ENCODE measurements at regions of chr6 and their contacts with region 1.

Region 1: DNA sequence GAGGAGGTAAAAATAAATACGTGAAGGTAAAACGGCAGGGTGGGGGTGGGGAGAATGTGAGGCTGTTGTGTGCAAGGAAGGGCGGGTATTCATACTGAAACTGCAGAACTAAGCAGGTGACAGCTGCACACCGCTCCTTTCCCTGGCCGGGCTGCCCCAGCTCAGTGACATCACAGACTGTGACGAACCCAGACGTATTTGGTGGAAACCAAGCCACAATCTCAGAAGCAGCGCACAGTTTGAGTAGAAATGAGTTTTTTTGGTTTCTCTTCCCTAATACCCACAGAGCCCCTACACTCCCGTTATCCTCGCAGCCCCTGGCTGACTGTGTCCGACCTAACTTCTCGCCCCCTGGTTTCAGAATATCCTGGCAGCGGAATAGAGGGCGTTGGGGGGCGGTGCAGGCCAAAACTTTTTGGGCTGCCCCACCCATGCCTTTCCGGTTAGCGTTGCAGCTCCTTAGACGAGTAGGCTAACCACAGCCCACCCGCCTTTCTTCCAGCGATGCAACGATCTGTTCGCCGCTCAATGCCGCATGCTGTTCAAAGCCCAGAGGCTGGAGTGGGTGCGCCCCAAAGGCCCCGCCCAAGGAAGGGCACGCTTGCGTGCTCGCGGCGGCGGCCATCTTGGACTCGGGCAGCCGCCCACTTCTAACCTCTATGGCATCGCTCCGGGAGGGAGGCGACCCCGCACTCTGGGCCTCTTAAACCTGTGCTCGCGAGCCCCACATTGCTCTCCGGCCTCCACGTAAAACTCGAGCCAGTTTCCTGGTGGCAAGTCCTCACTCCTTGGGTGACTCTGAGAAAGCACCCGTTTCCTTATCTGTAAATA is 9.1 kb downstream of the BAK1 start:
- DNase-seq: peak; percentile 83 to 97 (median 88)
- ATAC-seq: peak; percentile 84
- H3K4me3 ChIP-seq: peak overlapping the region; percentile 64
- H3K4me3 Mint-ChIP-seq: peak overlapping the region; percentile 88
- H3K27ac ChIP-seq: peak overlapping the region; percentile 93 to 97
- H3K27ac Mint-ChIP-seq: peak overlapping the region; percentile 99
- H3K4me1 ChIP-seq: peaks cover 42% of the 10 kb centered on the region
- H3K4me1 Mint-ChIP-seq: peaks cover 35% of the 10 kb centered on the region
- H3K27me3 ChIP-seq: no peaks in the 10 kb centered on the region
- H3K27me3 Mint-ChIP-seq: no peaks in the 10 kb centered on the region
- CTCF ChIP-seq: no peak

Region 2: DNA sequence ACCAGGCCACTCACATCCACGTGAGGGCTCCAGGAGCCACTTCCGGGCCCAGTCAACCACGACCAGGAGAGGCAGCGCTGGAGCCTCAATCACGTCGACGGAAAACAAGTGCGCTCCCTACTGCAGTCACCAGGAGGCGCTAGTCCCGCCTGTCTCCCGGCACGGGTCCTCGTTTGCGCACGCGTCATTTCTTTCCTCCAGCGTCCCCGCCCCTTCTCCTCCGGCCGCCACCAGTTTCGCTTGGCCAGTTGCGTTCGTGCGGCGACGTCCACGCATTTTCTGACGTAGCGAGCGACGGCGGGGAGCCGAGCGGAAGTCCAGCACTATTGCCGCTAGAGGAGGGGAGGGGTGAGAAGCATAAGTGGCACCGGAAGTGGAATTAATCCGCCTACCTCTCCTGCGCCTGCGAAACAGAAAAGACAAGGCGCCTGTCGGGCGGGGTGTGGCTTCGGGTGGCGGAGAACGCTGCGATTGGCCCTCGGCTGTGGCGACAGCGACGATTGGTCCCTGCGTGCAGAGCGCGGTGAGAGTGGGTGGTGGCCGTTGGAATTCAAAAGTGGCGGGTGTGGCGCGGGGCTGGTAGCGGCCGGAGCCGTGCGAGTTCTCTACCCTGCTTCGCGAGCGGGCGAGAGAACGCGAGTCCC is 179.6 kb before region 1 on chr6 and contains the start of gene KIFC1:
- CTCF ChIA-PET with region 1: no interaction called
- POLR2A ChIA-PET with region 1: interaction called, 8 read pairs
- intact Hi-C with region 1: loop called in 1 of 2 experiments (anchors 2 kb)
- DNase-seq: peak; percentile 98 to 100 (median 99)
- ATAC-seq: peak; percentile 86
- H3K4me3 ChIP-seq: peak within 1 kb of the TSS; percentile 65
- H3K4me3 Mint-ChIP-seq: peak within 1 kb of the TSS; percentile 87
- H3K27ac ChIP-seq: peak within 1 kb of the TSS; percentile 69 to 78
- H3K27ac Mint-ChIP-seq: peak within 1 kb of the TSS; percentile 91
- H3K4me1 ChIP-seq: peaks cover 25% of the 10 kb centered on the region
- H3K4me1 Mint-ChIP-seq: peaks cover 23% of the 10 kb centered on the region
- H3K27me3 ChIP-seq: no peaks in the 10 kb centered on the region
- H3K27me3 Mint-ChIP-seq: no peaks in the 10 kb centered on the region
- CTCF ChIP-seq: peak; percentile 99
- total RNA-seq, gene KIFC1: 1.2 to 1.6 TPM

Region 3: DNA sequence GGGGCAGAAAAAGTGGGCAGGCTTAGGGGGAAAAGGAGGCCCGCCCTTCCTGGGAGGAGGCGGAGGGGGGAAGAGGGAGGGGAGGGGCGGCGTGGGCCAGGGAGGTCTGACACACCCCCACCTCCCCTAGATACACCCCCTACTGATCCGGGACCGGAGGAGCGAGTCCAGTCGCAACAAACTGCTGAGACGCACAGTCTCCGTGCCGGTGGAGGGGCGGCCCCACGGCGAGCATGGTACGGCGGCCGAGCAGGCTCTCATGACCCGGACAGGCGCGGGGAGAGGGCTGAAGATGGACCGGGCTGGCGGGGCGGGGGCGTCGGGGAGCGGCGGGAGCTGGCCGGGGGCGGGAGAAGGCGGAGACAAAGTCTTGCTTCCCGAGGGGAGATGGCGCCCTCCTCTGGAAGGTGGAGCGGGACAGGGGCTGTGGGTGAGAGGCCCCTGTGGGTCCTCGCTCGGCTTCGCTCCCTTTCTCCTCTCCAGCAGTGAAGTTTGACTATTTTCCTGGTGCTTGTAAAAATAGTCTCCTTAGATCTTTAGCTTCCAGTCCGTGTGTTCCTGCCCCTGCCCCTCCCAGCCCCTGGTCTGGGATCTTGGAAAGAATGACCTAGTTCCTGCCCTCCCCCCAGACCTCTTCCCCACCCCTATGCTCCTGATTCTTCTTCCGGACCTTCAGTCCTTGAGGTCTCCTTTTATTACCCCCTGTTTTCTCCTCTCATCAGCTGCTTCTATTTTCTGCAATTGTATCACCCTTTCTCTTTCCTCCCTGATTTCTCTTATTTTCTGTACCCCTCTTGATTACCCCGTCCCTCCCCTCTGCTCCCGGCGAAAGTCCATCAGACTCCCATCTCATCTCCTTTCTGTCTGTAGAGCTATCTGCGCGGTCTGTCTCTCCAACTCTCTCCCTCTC is 145.1 kb before region 1 on chr6:
- CTCF ChIA-PET with region 1: no interaction called
- POLR2A ChIA-PET with region 1: interaction called, 25 read pairs
- intact Hi-C with region 1: loop called (anchors 5 kb)
- DNase-seq: peak; percentile 65 to 91 (median 80)
- ATAC-seq: peak; percentile 48
- H3K4me3 ChIP-seq: peak overlapping the region; percentile 71
- H3K4me3 Mint-ChIP-seq: peak overlapping the region; percentile 94
- H3K27ac ChIP-seq: peak overlapping the region; percentile 86 to 92
- H3K27ac Mint-ChIP-seq: peak overlapping the region; percentile 99
- H3K4me1 ChIP-seq: peaks cover 60% of the 10 kb centered on the region
- H3K4me1 Mint-ChIP-seq: peaks cover 80% of the 10 kb centered on the region
- H3K27me3 ChIP-seq: no peaks in the 10 kb centered on the region
- H3K27me3 Mint-ChIP-seq: no peaks in the 10 kb centered on the region
- CTCF ChIP-seq: peak; percentile 65

Region 4: GRCh38 chr6:33454009-33454946 is 116.7 kb before region 1 on chr6 and contains the start of gene ZBTB9:
- CTCF ChIA-PET with region 1: no interaction called
- POLR2A ChIA-PET with region 1: interaction called, 28 read pairs
- intact Hi-C with region 1: loop called in 1 of 2 experiments (anchors 2 kb)
- DNase-seq: peak; percentile 82 to 97 (median 92)
- ATAC-seq: peak; percentile 98
- H3K4me3 ChIP-seq: peak within 1 kb of the TSS; percentile 89
- H3K4me3 Mint-ChIP-seq: peak within 1 kb of the TSS; percentile 92
- H3K27ac ChIP-seq: peak within 1 kb of the TSS; percentile 55 to 60
- H3K27ac Mint-ChIP-seq: peak within 1 kb of the TSS; percentile 87
- H3K4me1 ChIP-seq: peaks cover 33% of the 10 kb centered on the region
- H3K4me1 Mint-ChIP-seq: peaks cover 41% of the 10 kb centered on the region
- H3K27me3 ChIP-seq: no peaks in the 10 kb centered on the region
- H3K27me3 Mint-ChIP-seq: no peaks in the 10 kb centered on the region
- CTCF ChIP-seq: no peak
- total RNA-seq, gene ZBTB9: 5.5 to 5.7 TPM

Region 5: DNA sequence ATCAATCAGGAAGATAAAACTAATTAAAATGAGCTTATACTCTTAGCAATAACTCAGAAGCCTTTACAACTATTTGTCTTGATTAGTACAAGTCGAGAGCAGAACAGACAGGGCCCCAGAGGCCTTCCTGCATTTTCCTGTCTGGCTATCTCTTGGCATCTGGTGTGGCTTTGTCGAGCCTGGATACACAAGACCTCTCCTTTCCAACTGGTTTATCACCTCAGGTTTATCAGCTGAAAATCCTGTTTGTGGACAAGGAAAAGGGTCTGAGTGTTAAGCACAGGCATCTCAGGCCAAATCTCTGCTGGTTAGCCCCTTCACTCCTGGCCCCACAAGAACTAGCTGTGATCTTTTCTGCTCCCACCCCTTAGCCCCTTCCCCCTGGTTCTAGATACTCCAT is 23.5 kb before region 1 on chr6:
- CTCF ChIA-PET with region 1: no interaction called
- POLR2A ChIA-PET with region 1: interaction called, 18 read pairs
- intact Hi-C with region 1: no loop called
- DNase-seq: no peak
- ATAC-seq: no peak
- H3K4me3 ChIP-seq: no peak overlapping the region
- H3K4me3 Mint-ChIP-seq: no peak overlapping the region
- H3K27ac ChIP-seq: no peak overlapping the region
- H3K27ac Mint-ChIP-seq: peak overlapping the region; percentile 30
- H3K4me1 ChIP-seq: peaks cover 16% of the 10 kb centered on the region
- H3K4me1 Mint-ChIP-seq: peaks cover 22% of the 10 kb centered on the region
- H3K27me3 ChIP-seq: no peaks in the 10 kb centered on the region
- H3K27me3 Mint-ChIP-seq: no peaks in the 10 kb centered on the region
- CTCF ChIP-seq: no peak

Region 6: DNA sequence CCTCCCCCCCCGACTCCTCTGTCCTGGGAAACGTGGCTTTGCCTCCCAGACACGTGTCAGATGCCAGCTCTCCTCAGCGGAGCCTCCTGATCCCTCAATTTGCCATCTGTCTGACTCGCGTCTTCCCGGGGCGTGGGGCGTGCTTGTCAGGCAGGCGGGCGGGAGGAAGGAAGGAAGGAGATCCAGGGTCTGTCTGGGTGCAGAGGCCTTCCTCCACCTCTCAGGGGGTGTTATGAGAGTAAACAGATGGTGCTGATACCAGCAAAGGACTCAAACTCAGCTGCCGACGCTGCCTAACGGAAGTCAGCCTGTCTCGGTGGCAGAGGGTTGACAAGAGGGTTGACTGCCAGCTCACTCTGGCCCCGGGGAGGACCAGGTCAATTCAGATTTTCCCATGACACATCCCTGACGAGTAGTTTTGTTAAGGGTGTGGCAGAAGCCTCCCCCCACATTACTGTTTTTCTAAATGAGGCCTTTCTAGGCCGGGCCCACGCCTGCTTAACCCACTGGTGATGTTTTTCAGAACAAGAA is 123.4 kb after region 1 on chr6:
- CTCF ChIA-PET with region 1: no interaction called
- POLR2A ChIA-PET with region 1: interaction called, 13 read pairs
- intact Hi-C with region 1: no loop called
- DNase-seq: peak; percentile 40 to 82 (median 66)
- ATAC-seq: peak; percentile 68
- H3K4me3 ChIP-seq: no peak overlapping the region
- H3K4me3 Mint-ChIP-seq: peak overlapping the region; percentile 81
- H3K27ac ChIP-seq: peak overlapping the region; percentile 77 to 88
- H3K27ac Mint-ChIP-seq: peak overlapping the region; percentile 97
- H3K4me1 ChIP-seq: peaks cover 79% of the 10 kb centered on the region
- H3K4me1 Mint-ChIP-seq: peaks cover 81% of the 10 kb centered on the region
- H3K27me3 ChIP-seq: no peaks in the 10 kb centered on the region
- H3K27me3 Mint-ChIP-seq: no peaks in the 10 kb centered on the region
- CTCF ChIP-seq: no peak